ENCODE measurements at regions of chr11 and their contacts with region 1.

Region 1: DNA sequence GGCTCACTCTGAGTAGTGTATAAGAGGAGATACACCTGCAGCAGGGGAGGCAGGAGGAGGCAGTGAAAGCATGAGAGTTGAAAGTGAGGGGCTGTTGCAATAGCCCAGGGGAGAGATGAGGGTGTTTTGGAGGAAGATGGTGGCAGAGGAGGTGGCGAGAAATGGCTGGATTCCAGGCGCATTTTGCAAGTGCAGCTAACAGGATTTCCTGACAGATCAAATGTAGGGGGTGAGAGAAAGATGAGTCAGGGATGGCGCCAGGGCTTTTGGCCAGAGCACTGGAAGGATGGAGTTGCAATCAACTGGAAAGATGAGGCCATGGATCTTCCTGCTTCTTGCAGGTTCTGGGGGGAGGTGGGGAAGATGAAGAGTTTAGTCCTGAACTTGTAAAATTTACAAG is 16.8 kb upstream of the TSPAN18 start:
- DNase-seq: no peak
- ATAC-seq: no peak
- H3K4me3 ChIP-seq: no peak overlapping the region
- H3K4me1 ChIP-seq: no peaks in the 10 kb centered on the region
- CTCF ChIP-seq: no peak

Region 2: DNA sequence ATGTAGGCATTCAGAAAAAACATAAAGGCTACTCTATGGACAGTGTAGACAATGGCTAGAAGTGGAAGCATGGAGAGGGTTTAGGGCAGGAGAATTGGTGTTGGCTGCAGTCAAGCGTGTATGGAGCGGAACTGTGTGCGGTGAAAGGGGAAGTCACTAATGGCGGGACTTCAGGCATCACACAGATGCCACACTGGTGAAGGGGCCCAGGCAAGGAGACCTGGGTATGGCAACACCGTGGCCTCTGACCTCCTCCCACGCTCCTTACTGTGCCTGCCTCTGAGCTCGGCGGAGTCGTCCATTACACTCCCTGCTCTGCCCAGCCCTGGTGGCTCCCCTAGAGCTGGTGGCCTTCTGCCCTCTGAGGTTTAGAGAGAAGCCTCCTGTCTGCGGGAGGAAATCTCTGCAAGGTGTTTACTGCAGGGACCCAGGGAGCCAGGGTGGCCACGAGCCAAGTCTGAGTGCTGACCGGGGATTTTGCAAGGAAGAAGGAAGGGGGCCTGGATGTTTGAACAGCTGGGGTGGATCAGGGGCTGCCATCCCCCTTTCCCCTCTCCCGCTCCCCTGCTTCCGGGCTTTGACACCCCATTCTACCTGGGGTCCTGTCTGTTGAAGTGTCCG is 58.3 kb before region 1 on chr11:
- intact Hi-C with region 1: loop called in 1 of 2 experiments (anchors 5 kb)
- DNase-seq: no peak
- ATAC-seq: no peak
- H3K4me3 ChIP-seq: no peak overlapping the region
- H3K4me1 ChIP-seq: no peaks in the 10 kb centered on the region
- CTCF ChIP-seq: no peak

Region 3: DNA sequence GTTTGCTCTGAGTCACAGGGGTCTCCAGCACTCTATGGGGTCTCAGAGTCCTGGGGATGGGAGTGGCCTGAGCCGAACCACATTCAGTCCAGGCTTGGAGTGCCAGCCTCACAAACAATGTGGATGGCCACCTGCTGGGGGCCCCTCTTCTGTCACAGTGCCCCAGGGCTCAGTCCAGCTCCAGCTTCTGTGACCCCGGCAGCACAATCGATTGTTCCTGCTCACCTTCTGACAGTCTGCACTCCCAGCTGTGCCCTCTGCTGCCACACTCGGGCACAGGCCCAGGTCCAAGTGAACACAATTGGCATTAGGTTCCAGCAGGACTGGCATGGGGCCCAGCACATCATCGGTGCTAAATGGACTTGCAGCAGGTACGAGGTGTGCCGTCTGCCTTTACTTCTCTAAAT is 155.9 kb after region 1 on chr11:
- intact Hi-C with region 1: no loop called
- DNase-seq: no peak
- ATAC-seq: no peak
- H3K4me3 ChIP-seq: no peak overlapping the region
- H3K4me1 ChIP-seq: peaks cover 2% of the 10 kb centered on the region
- CTCF ChIP-seq: no peak

Region 4: DNA sequence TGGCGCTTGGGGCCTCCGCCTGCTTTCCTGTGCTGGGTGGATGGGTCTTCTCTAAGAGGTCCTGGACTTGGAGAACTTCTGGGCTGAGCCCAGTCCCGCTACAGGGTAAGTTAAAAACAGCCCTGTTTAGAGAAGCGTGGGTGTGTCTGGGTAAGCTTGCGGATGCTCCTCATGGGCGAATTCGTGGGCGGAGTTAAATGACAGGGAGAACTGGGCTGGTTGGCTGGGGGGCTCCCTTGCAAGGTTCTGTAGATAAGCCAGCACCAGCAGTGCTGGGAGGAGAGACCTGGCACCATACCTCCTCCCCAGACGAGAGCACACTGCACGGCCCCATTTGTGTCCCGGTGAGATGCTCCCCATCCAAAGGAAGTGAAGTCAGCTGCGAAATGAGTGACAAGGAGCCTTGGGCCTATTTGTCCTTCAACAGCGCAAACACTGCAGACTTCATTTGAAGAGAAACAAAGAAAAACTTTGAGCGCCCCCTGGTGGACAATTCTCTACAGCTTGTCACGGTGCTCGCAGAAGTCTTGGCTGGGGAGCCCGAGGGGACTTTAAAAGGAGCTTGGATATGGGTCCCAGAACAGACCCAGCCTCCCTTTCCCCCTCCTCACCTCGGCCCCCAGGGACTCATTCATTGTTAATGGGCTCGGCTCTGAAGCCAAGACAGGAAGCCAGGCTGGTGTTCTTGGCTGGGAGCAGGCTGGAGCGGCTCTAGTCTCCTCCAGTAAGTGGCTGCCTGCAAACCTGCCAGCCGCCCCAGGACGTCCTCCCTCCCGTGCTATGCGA is 201.3 kb after region 1 on chr11:
- intact Hi-C with region 1: no loop called
- DNase-seq: peak in 2 of 3 donors; percentile 64 to 98
- ATAC-seq: peak; percentile 80
- H3K4me3 ChIP-seq: no peak overlapping the region
- H3K4me1 ChIP-seq: peaks cover 9% of the 10 kb centered on the region
- CTCF ChIP-seq: peak; percentile 53

Measured in mucosa of descending colon (tissue), 3 donors.